GM12878 (cell line): ENCODE measurements at regions of chr3 and their contacts with region 1.

Region 1: DNA sequence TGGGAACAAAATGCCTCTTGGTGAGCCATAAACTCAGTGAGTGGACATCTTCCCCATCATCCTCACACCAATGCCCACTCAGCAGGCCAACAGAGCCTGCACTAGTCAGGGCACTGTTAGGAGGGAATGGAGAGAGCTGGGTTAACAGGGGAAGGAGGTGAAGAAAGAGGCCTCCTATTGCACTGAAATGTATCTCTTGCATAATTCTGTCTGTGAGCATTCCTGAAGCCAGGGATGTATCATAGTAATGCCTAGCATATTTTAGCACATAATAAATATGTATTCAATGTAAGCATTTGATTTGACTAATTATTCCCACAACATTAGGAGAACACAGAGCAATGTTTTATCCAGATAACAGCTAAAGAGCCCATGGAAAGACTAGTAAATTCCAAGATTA is 81.2 kb downstream of the ANO10 start:
- DNase-seq: no peak
- ATAC-seq: no peak
- H3K4me3 ChIP-seq: no peak overlapping the region
- H3K27ac ChIP-seq: no peak overlapping the region
- H3K4me1 ChIP-seq: no peaks in the 10 kb centered on the region
- H3K27me3 ChIP-seq: no peaks in the 10 kb centered on the region
- CTCF ChIP-seq: no peak
- EP300 ChIP-seq: no peak
- POLR2A ChIP-seq: no peak
- RAD21 ChIP-seq: no peak

Region 2: DNA sequence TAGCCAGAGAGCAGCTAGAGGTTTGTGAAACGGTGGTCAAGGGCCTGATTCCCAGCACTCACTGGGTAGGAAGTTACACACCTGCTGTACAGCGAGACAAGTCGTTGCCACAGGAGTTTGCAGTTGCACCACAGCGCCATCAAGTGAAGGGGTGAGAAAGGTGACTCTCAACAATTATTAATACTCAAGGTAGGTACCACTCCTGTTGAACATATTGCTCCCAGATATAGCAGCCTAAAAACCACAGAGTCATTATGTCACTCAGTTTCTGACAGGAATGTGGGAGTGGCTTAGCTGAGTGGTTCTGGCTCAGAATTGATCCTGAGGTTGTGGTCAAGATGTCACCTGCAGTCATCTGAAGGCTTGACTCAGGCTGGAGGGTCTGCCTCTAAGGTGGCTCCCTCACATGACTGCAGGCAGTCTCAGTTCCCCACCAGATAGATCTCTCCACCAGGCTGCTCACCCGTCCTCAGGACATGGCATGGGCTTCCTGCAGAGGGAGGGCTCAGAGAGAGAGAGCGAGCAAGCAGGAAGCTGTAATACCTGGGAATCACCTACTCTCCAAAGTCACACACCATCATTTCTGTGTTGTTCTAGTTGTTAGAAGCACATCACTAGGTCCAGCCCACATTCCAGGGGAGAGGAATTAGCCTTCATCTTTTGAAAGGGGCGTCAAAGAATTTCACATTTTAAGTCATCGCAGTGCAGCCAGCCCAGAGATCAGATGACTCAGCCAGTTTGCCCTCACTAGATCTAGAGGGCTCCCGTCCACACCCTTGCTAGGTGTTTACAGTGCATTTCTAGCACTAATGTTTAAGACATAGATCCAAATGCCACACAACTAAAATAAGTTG is 98.2 kb after region 1 on chr3:
- CTCF ChIA-PET with region 1: interaction called, 7 read pairs
- POLR2A ChIA-PET with region 1: no interaction called
- RAD21 ChIA-PET with region 1: interaction called, 5 read pairs
- SMC1A ChIA-PET with region 1: interaction called, 8 read pairs
- in situ Hi-C with region 1: no loop called
- intact Hi-C with region 1: loop called (anchors 1 kb)
- DNase-seq: no peak
- ATAC-seq: peak; percentile 93
- H3K4me3 ChIP-seq: no peak overlapping the region
- H3K27ac ChIP-seq: no peak overlapping the region
- H3K4me1 ChIP-seq: no peaks in the 10 kb centered on the region
- H3K27me3 ChIP-seq: no peaks in the 10 kb centered on the region
- CTCF ChIP-seq: peak; percentile 35 to 74 (median 59)
- EP300 ChIP-seq: no peak
- POLR2A ChIP-seq: no peak
- RAD21 ChIP-seq: peak; percentile 22; the same call in 1 of the 2 replicates

Region 3: GRCh38 chr3:43759297-43759782 is 218.7 kb after region 1 on chr3:
- CTCF ChIA-PET with region 1: no interaction called
- POLR2A ChIA-PET with region 1: no interaction called
- RAD21 ChIA-PET with region 1: interaction called, 3 read pairs
- SMC1A ChIA-PET with region 1: no interaction called
- in situ Hi-C with region 1: no loop called
- intact Hi-C with region 1: loop called (anchors 1 kb)
- DNase-seq: no peak
- ATAC-seq: peak; percentile 67
- H3K4me3 ChIP-seq: no peak overlapping the region
- H3K27ac ChIP-seq: no peak overlapping the region
- H3K4me1 ChIP-seq: no peaks in the 10 kb centered on the region
- H3K27me3 ChIP-seq: no peaks in the 10 kb centered on the region; a peak in 1 of 4 replicates
- CTCF ChIP-seq: peak; percentile 15 to 34 (median 16); a peak in 2 of 6 replicates
- EP300 ChIP-seq: no peak
- POLR2A ChIP-seq: no peak
- RAD21 ChIP-seq: peak; percentile 34